Endothelial cell of umbilical vein (primary cell): ENCODE measurements at regions of chr17 and their contacts with region 1.

Region 1: DNA sequence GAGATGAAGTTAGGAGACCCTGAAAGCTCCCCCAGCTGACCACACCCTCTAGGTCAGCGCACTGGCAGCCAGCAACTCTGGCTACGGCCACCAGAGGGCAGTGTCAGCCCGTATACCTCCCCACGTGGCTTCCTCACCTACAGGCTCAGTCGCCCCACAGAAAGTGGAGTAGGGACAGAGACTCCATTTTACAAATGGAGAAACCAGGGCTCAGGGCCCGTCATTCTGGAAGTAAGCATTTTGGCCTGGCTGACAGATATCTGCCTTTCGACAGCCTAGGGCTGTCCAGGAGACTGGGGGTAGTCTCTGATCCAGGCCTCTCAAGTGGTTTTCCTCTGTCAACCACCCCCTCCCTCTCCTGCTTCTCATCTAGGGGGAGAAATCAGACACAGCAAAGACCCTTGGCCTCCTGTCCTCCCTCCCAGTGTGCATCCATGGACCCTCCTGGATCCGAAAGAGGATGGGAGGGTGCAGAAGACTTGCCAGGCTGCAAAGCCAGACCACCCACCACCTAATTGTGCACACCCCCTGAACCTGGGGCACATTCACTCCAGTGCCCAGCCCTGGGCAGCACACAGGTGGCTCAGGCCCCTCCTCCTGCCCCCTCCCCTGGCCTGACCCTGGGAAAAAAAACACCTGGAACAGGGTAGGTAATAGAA is 3.8 kb upstream of the HAP1 start:
- DNase-seq: peak; percentile 81
- H3K4me3 ChIP-seq: no peak overlapping the region
- H3K27ac ChIP-seq: no peak overlapping the region
- H3K4me1 ChIP-seq: peaks cover 2% of the 10 kb centered on the region
- H3K27me3 ChIP-seq: peaks cover 27% of the 10 kb centered on the region in 2 experiments
- CTCF ChIP-seq: peak; percentile 95 to 96
- POLR2A ChIP-seq: no peak

Region 2: GRCh38 chr17:41695954-41696756 is 42.1 kb before region 1 on chr17:
- CTCF ChIA-PET with region 1: interaction called, 10 read pairs
- POLR2A ChIA-PET with region 1: no interaction called
- dilution Hi-C with region 1: no loop called
- intact Hi-C with region 1: no loop called
- DNase-seq: peak; percentile 58
- H3K4me3 ChIP-seq: no peak overlapping the region
- H3K27ac ChIP-seq: no peak overlapping the region
- H3K4me1 ChIP-seq: no peaks in the 10 kb centered on the region
- H3K27me3 ChIP-seq: no peaks in the 10 kb centered on the region
- CTCF ChIP-seq: peak; percentile 72 to 82
- POLR2A ChIP-seq: peak; percentile 28

Region 3: GRCh38 chr17:41767324-41768042 is 29.3 kb after region 1 on chr17:
- CTCF ChIA-PET with region 1: no interaction called
- POLR2A ChIA-PET with region 1: no interaction called
- dilution Hi-C with region 1: no loop called
- intact Hi-C with region 1: no loop called
- DNase-seq: no peak
- H3K4me3 ChIP-seq: no peak overlapping the region
- H3K27ac ChIP-seq: no peak overlapping the region
- H3K4me1 ChIP-seq: peaks cover under 1% of the 10 kb centered on the region
- H3K27me3 ChIP-seq: no peaks in the 10 kb centered on the region
- CTCF ChIP-seq: no peak
- POLR2A ChIP-seq: no peak

Region 4: DNA sequence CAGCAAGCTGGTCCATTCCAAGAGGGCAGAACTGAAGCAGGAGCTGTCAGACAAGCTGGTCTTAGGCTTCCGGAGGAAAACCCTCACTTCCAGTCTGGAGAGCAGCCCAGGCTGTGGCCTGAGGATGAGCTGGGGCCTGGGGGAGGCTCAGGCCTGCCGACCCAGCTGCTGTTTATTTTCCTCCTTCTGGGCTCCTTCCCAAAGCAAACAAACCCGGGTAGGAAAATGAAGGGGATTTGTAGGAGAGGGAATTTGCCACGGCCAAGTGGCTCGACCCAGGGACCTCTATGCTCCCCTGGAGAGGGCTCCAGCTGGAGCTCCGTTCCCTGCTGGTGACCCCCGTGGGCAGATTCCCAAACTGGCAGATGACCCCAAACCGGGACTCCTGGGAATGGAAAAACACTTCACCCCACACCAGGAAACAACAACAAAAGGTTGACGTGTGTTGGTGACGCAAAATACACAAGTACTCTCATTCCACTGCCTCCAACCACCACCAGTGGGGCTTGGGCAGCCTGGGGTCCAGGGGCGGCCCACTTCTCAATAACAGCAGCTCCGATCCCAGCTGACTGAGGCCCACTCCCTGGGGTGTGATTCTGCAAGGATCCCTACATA is 39.5 kb after region 1 on chr17:
- CTCF ChIA-PET with region 1: interaction called, 8 read pairs
- POLR2A ChIA-PET with region 1: no interaction called
- dilution Hi-C with region 1: no loop called
- intact Hi-C with region 1: loop called (anchors 1 kb)
- DNase-seq: peak; percentile 100
- H3K4me3 ChIP-seq: no peak overlapping the region
- H3K27ac ChIP-seq: peak overlapping the region; percentile 97
- H3K4me1 ChIP-seq: peaks cover 45% of the 10 kb centered on the region
- H3K27me3 ChIP-seq: no peaks in the 10 kb centered on the region
- CTCF ChIP-seq: peak in 1 of 2 donors; percentile 36
- POLR2A ChIP-seq: peak; percentile 65

Region 5: DNA sequence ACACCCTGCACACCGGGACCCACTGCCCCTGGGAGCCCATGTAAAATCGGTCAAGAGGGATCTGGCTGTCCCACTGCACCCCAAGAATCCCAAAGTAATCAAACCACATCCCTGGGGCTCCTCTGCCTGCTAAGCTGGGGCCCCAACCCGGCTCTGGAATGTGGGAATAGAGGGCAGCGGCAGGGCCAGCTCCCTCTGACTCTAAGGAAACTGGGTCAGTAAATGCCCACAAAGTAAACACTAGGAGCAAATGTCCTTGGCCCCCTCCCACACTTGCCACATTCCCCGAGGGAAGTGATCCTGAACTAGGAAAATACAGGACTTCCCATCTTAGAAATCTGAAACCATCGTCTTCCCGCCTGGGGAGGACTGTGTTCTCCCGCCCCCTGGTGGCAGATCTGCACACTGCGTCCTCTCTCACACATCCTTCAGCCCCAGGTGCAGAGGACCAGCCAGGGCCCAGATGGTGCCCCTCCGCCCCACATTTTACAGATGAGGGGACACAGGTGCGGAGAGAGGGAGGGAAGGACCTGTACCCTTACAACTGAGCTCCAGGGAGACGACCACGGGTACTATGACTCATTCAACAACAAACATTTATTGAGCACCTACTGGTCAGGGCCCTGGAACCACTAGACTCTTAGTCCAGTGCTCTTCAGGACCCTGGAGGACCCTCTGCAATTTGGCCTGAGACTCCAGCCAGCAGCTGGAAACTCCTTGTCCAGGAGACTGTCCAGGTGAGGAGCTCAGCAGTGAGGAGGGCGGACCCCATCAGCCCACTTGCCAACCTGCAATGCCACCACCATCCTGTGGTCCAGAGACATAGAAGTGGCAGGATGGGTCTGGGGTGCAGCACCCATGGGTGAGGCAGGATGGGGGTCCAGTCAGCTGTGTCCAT is 63.4 kb after region 1 on chr17:
- CTCF ChIA-PET with region 1: interaction called, 50 read pairs
- POLR2A ChIA-PET with region 1: no interaction called
- dilution Hi-C with region 1: loop called (anchors 10 kb)
- intact Hi-C with region 1: loop called (anchors 1 kb)
- DNase-seq: peak; percentile 77
- H3K4me3 ChIP-seq: no peak overlapping the region
- H3K27ac ChIP-seq: no peak overlapping the region
- H3K4me1 ChIP-seq: peaks cover 8% of the 10 kb centered on the region
- H3K27me3 ChIP-seq: no peaks in the 10 kb centered on the region
- CTCF ChIP-seq: peak; percentile 84 to 95
- POLR2A ChIP-seq: peak; percentile 65

Region 6: DNA sequence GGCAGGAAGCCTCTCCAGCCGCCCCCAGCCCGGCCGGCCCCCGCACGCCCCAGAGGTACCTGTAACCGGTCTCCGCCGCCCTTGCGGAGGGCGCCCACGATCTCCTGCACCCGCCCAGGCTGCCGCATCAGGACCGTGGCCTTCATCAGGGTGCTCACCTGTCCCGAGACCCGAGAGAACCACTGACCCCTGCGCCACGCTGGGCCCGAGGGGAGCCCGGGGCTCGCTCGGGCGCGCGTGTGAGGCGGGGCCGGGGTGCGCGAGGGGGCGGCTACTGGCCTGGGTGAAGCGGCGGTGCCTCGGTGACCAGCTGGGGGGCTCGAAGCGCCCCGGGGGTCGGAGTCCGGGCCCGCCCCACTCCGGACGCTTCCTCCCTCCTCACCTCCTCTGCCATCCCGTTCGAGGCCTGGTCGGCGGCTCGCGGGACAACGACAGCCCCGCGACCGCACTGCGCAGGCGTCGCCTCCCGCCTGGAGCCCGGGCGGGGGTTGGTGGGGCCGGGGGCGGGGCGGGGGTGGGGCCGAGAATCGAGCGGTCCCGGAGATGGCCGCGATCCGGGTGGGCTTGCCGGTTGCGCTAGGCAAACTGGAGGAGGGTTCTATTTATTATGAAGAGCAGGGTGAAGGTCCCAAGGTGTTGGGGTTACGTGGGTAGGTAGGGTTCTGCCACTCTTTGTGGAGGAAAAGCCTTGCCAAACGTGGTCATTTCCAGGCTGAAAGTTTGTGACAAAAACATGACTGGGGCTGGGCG is 97.8 kb after region 1 on chr17 and contains the start of gene NT5C3B:
- CTCF ChIA-PET with region 1: no interaction called
- POLR2A ChIA-PET with region 1: no interaction called
- dilution Hi-C with region 1: no loop called
- intact Hi-C with region 1: loop called (anchors 1 kb)
- DNase-seq: peak; percentile 44
- H3K4me3 ChIP-seq: peak within 1 kb of the TSS; percentile 62 to 80 (median 71)
- H3K27ac ChIP-seq: no peak within 1 kb of the TSS
- H3K4me1 ChIP-seq: peaks cover 5% of the 10 kb centered on the region
- H3K27me3 ChIP-seq: no peaks in the 10 kb centered on the region
- CTCF ChIP-seq: no peak
- POLR2A ChIP-seq: no peak
- total RNA-seq, gene NT5C3B: 57.4 and 67.3 TPM in 2 replicates

Region 7: GRCh38 chr17:41885733-41886132 is 147.5 kb after region 1 on chr17:
- CTCF ChIA-PET with region 1: interaction called, 3 read pairs
- POLR2A ChIA-PET with region 1: no interaction called
- dilution Hi-C with region 1: no loop called
- intact Hi-C with region 1: loop called (anchors 5 kb)
- DNase-seq: no peak
- H3K4me3 ChIP-seq: no peak overlapping the region
- H3K27ac ChIP-seq: no peak overlapping the region
- H3K4me1 ChIP-seq: no peaks in the 10 kb centered on the region
- H3K27me3 ChIP-seq: no peaks in the 10 kb centered on the region
- CTCF ChIP-seq: peak in 1 of 2 donors; percentile 9
- POLR2A ChIP-seq: no peak